Activated naive CD4-positive, alpha-beta T cell treated with anti-CD3 and anti-CD28 coated beads for 36 hours (primary cell): ENCODE measurements at regions of chr3 and their contacts with region 1.

Region 1: GRCh38 chr3:50611464-50612233 is at the start of gene CISH:
- DNase-seq: peak; percentile 99
- H3K4me3 Mint-ChIP-seq: peak within 1 kb of the TSS; percentile 96
- H3K27ac Mint-ChIP-seq: peak within 1 kb of the TSS; percentile 100
- H3K4me1 Mint-ChIP-seq: peaks cover 36% of the 10 kb centered on the region
- H3K27me3 Mint-ChIP-seq: no peaks in the 10 kb centered on the region
- total RNA-seq, gene CISH: 136 to 138 TPM

Region 2: GRCh38 chr3:49582177-49582576 is 1029.5 kb before region 1 on chr3:
- CTCF ChIA-PET with region 1: no interaction called
- intact Hi-C with region 1: no loop called
- DNase-seq: no peak
- H3K4me3 Mint-ChIP-seq: no peak overlapping the region
- H3K27ac Mint-ChIP-seq: no peak overlapping the region
- H3K4me1 Mint-ChIP-seq: no peaks in the 10 kb centered on the region
- H3K27me3 Mint-ChIP-seq: no peaks in the 10 kb centered on the region

Region 3: GRCh38 chr3:50519471-50520089 is 92.1 kb before region 1 on chr3:
- CTCF ChIA-PET with region 1: interaction called, 3 read pairs
- intact Hi-C with region 1: loop called (anchors 1 kb)
- DNase-seq: peak; percentile 86
- H3K4me3 Mint-ChIP-seq: no peak overlapping the region
- H3K27ac Mint-ChIP-seq: no peak overlapping the region
- H3K4me1 Mint-ChIP-seq: peaks cover 7% of the 10 kb centered on the region
- H3K27me3 Mint-ChIP-seq: no peaks in the 10 kb centered on the region

Region 4: GRCh38 chr3:50600841-50601591 is 10.6 kb before region 1 on chr3:
- CTCF ChIA-PET with region 1: interaction called, 95 read pairs
- intact Hi-C with region 1: loop called (anchors 1 kb)
- DNase-seq: peak; percentile 95
- H3K4me3 Mint-ChIP-seq: peak overlapping the region; percentile 68
- H3K27ac Mint-ChIP-seq: peak overlapping the region; percentile 100
- H3K4me1 Mint-ChIP-seq: peaks cover 74% of the 10 kb centered on the region
- H3K27me3 Mint-ChIP-seq: no peaks in the 10 kb centered on the region

Region 5: GRCh38 chr3:50971487-50971924 is 359.9 kb after region 1 on chr3:
- CTCF ChIA-PET with region 1: interaction called, 6 read pairs
- intact Hi-C with region 1: loop called (anchors 1 kb)
- DNase-seq: peak; percentile 73
- H3K4me3 Mint-ChIP-seq: no peak overlapping the region
- H3K27ac Mint-ChIP-seq: no peak overlapping the region
- H3K4me1 Mint-ChIP-seq: peaks cover 16% of the 10 kb centered on the region
- H3K27me3 Mint-ChIP-seq: no peaks in the 10 kb centered on the region

Region 6: GRCh38 chr3:50986726-50987125 is 375.1 kb after region 1 on chr3:
- CTCF ChIA-PET with region 1: no interaction called
- intact Hi-C with region 1: no loop called
- DNase-seq: no peak
- H3K4me3 Mint-ChIP-seq: no peak overlapping the region
- H3K27ac Mint-ChIP-seq: no peak overlapping the region
- H3K4me1 Mint-ChIP-seq: no peaks in the 10 kb centered on the region
- H3K27me3 Mint-ChIP-seq: no peaks in the 10 kb centered on the region

Region 7: GRCh38 chr3:51391075-51391567 is 779.5 kb after region 1 on chr3 and contains the start of gene RBM15B:
- CTCF ChIA-PET with region 1: interaction called, 13 read pairs
- intact Hi-C with region 1: loop called (anchors 1 kb)
- DNase-seq: peak; percentile 98
- H3K4me3 Mint-ChIP-seq: peak within 1 kb of the TSS; percentile 81
- H3K27ac Mint-ChIP-seq: peak within 1 kb of the TSS; percentile 85
- H3K4me1 Mint-ChIP-seq: peaks cover 77% of the 10 kb centered on the region
- H3K27me3 Mint-ChIP-seq: no peaks in the 10 kb centered on the region
- total RNA-seq, gene RBM15B: 12.8 to 13.5 TPM